Activated CD4-positive, alpha-beta memory T cell treated with anti-CD3 and anti-CD28 coated beads for 36 hours (primary cell): ENCODE measurements at regions of chr17 and their contacts with region 1.

Region 1: DNA sequence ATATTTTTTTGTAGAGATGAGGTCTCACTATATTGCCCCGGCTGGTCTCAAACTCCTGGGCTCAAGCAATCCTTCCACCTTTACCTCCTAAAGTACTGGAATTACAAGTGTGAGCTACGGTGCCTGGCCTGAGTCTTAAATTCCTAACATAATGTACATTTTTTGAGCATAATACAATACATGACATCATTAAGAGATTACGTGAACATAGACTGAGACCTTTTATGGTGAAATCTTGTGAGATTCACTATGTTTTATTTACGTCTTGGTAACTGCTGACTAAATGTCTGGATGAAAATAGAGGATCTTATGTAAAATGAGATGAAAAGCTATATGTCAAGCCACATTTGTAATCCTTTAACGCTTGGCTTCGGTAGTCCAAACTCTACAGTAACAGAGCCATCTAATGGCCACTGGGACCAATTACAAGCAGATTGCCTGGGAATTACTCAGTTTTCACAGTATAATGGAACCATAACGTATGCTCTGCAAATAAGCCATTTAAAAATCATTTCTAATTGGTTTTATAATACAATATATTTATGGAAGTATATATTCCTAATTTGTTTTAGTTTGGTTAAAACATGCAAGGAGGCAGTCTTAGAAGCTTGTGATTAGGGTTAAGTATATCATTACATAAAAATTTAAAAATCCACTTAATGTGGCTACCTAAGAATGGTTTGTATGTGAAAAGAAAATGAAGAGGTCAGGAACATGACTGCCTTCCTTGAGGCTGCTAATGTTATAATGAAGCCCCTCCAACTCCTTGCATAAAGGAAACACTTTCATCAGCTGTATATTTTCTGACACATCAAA is 8.1 kb upstream of the EFCAB13 start:
- DNase-seq: peak; percentile 40
- H3K4me3 Mint-ChIP-seq: no peak overlapping the region
- H3K27ac Mint-ChIP-seq: no peak overlapping the region
- H3K4me1 Mint-ChIP-seq: no peaks in the 10 kb centered on the region
- H3K27me3 Mint-ChIP-seq: no peaks in the 10 kb centered on the region

Region 2: GRCh38 chr17:47004906-47005305 is 310.8 kb before region 1 on chr17:
- CTCF ChIA-PET with region 1: no interaction called
- POLR2A ChIA-PET with region 1: no interaction called
- intact Hi-C with region 1: loop called (anchors 5 kb)
- DNase-seq: no peak
- H3K4me3 Mint-ChIP-seq: no peak overlapping the region
- H3K27ac Mint-ChIP-seq: no peak overlapping the region
- H3K4me1 Mint-ChIP-seq: peaks cover 5% of the 10 kb centered on the region
- H3K27me3 Mint-ChIP-seq: no peaks in the 10 kb centered on the region

Region 3: GRCh38 chr17:47229535-47230443 is 85.9 kb before region 1 on chr17:
- CTCF ChIA-PET with region 1: interaction called, 74 read pairs
- POLR2A ChIA-PET with region 1: no interaction called
- intact Hi-C with region 1: loop called (anchors 1 kb)
- DNase-seq: peak; percentile 85
- H3K4me3 Mint-ChIP-seq: peak overlapping the region; percentile 60
- H3K27ac Mint-ChIP-seq: no peak overlapping the region
- H3K4me1 Mint-ChIP-seq: peaks cover 11% of the 10 kb centered on the region
- H3K27me3 Mint-ChIP-seq: no peaks in the 10 kb centered on the region

Region 4: GRCh38 chr17:47301146-47301545 is 14.5 kb before region 1 on chr17:
- CTCF ChIA-PET with region 1: interaction called, 12 read pairs
- POLR2A ChIA-PET with region 1: no interaction called
- intact Hi-C with region 1: no loop called
- DNase-seq: peak; percentile 53
- H3K4me3 Mint-ChIP-seq: no peak overlapping the region
- H3K27ac Mint-ChIP-seq: no peak overlapping the region
- H3K4me1 Mint-ChIP-seq: peaks cover 26% of the 10 kb centered on the region
- H3K27me3 Mint-ChIP-seq: peaks cover 2% of the 10 kb centered on the region